CD8-positive, alpha-beta memory T cell (primary cell): ENCODE measurements at regions of chr7 and their contacts with region 1.

Region 1: DNA sequence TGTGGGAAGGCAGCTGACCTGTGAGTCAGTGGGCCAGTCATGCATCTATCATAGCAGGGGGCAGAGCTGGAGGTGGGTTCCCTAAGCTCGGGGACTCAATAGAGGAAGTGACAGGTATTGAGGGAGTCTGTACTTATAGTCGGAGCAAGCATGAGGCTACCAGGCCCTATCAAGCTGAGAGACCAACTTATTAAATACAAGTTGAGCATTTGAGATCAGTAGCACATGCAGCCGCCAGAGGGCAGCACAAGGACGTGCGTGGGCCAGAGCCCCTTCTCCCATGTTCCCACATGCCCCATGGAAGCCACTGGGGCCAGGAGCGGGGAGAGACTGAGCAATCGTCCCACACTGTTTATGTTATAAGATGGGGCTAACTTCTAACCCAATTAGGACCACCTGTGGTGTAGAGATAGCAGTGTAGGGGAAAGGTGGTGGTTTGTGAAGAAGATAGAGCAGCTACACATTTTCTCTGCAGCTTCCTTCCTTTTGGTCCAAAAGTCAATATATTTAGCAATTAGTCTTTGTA is 13.0 kb upstream of the STK31 start:
- DNase-seq: peak; percentile 27 to 69 (median 32)
- H3K4me3 ChIP-seq: no peak overlapping the region
- H3K4me3 Mint-ChIP-seq: peak overlapping the region in 1 of 7 donors; percentile 67
- H3K27ac ChIP-seq: no peak overlapping the region
- H3K27ac Mint-ChIP-seq: no peak overlapping the region
- H3K4me1 ChIP-seq: no peaks in the 10 kb centered on the region
- H3K4me1 Mint-ChIP-seq: peaks cover 2 to 5% (median 3%) of the 10 kb centered on the region in 3 donors
- H3K27me3 ChIP-seq: no peaks in the 10 kb centered on the region
- H3K27me3 Mint-ChIP-seq: no peaks in the 10 kb centered on the region

Region 2: GRCh38 chr7:23679898-23680413 is 17.0 kb before region 1 on chr7 and contains the start of gene FAM221A:
- CTCF ChIA-PET with region 1: interaction called, 29 read pairs
- POLR2A ChIA-PET with region 1: no interaction called
- DNase-seq: peak; percentile 73 to 85 (median 77)
- H3K4me3 ChIP-seq: peak within 1 kb of the TSS; percentile 94
- H3K4me3 Mint-ChIP-seq: peak within 1 kb of the TSS; percentile 93 to 97 (median 96)
- H3K27ac ChIP-seq: peak within 1 kb of the TSS; percentile 18
- H3K27ac Mint-ChIP-seq: peak within 1 kb of the TSS; percentile 65 to 96 (median 84)
- H3K4me1 ChIP-seq: peaks cover 4% of the 10 kb centered on the region
- H3K4me1 Mint-ChIP-seq: peaks cover 17 to 30% (median 21%) of the 10 kb centered on the region in 3 donors
- H3K27me3 ChIP-seq: no peaks in the 10 kb centered on the region
- H3K27me3 Mint-ChIP-seq: peaks cover 0 to 4% of the 10 kb centered on the region in 2 donors
- total RNA-seq, gene FAM221A: 5.8 to 6.2 TPM

Region 3: DNA sequence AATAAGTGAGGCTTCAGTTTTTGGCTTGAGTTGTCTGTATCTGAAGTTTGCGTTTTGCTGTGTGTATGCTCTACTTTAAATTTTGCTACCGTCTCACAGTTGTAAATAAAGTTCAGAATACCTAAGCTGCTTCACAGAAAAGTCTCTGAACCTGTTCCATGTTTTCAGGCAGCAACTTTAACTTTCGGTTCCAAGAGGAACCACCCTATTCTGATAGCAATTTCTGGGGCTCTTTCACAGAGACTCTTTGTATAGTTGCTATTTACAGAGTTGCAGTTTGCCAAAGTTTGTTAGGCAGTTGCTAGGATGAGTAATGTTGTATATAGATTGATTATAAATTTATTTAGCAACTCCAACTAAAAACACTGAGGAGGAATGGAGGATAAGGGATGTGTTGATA is 11.2 kb before region 1 on chr7:
- CTCF ChIA-PET with region 1: interaction called, 29 read pairs
- POLR2A ChIA-PET with region 1: no interaction called
- DNase-seq: no peak
- H3K4me3 ChIP-seq: no peak overlapping the region
- H3K4me3 Mint-ChIP-seq: peak overlapping the region in 1 of 7 donors; percentile 41
- H3K27ac ChIP-seq: no peak overlapping the region
- H3K27ac Mint-ChIP-seq: no peak overlapping the region
- H3K4me1 ChIP-seq: peaks cover 4% of the 10 kb centered on the region
- H3K4me1 Mint-ChIP-seq: peaks cover 13 to 21% (median 15%) of the 10 kb centered on the region in 3 donors
- H3K27me3 ChIP-seq: no peaks in the 10 kb centered on the region
- H3K27me3 Mint-ChIP-seq: no peaks in the 10 kb centered on the region

Region 4: DNA sequence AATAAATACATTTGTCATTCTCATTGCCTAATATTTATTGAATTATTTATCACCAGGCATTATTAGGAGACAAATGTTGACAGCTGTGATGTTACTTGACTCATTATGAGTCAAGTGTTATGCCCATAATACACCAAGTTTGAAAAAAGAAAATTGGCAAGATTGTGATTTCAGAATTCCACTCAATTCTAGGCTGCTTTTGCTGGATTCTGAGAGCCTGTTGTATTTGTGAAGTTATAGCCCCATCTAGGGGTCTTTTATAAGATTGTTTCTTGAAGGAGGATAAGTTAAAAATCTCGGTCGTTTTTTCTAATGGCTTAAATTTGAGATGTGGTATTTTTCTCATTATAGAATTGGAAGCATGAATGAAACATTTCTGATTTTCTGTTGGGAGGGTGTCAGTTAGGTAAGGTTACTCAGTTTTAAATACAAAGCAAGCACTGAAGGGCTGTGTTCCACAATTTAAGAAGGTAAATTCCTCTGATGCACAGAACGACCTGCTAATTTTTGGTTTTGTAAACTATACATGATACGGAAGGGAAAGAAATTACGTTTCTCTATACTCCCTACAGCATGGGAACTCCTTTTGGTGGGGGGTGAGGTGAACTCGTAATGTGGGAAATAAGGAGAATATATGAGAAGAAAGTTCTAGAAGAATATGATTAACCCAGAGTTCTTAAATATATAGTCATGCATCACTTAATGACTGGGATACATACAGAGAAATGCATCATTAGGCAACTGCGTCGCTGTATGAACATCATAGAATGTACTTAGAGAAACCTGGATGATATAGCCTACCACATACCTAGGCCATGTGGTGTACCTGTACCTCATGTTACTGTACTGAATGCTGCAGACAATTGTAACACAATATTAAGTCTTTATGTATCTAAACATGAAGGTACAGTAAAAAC is 15.6 kb after region 1 on chr7:
- CTCF ChIA-PET with region 1: interaction called, 18 read pairs
- POLR2A ChIA-PET with region 1: no interaction called
- DNase-seq: peak in 2 of 5 donors; percentile 18 to 40
- H3K4me3 ChIP-seq: no peak overlapping the region
- H3K4me3 Mint-ChIP-seq: no peak overlapping the region
- H3K27ac ChIP-seq: no peak overlapping the region
- H3K27ac Mint-ChIP-seq: no peak overlapping the region
- H3K4me1 ChIP-seq: no peaks in the 10 kb centered on the region
- H3K4me1 Mint-ChIP-seq: no peaks in the 10 kb centered on the region
- H3K27me3 ChIP-seq: no peaks in the 10 kb centered on the region
- H3K27me3 Mint-ChIP-seq: peaks cover 0 to 4% of the 10 kb centered on the region in 2 donors

Region 5: DNA sequence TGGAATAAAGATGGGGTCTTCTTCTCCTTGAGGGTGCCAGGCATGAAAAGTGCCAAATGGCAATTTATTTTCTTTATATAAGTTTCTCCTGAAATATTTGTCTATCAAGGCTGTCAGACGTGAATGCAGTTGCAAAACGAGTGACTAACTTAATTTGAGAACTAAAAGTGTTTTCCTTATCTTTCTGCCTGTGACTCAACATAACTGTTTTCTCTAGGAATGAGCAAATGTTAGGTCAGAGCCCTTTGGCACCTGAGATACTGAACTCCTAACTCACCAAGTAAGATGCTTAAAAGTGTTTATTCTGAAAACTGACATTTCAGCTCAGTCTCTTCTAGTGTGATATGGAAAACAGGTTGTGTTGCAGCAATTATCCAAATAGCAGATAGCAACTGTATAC is 210.0 kb after region 1 on chr7:
- CTCF ChIA-PET with region 1: no interaction called
- POLR2A ChIA-PET with region 1: no interaction called
- DNase-seq: no peak
- H3K4me3 ChIP-seq: no peak overlapping the region
- H3K4me3 Mint-ChIP-seq: no peak overlapping the region
- H3K27ac ChIP-seq: no peak overlapping the region
- H3K27ac Mint-ChIP-seq: no peak overlapping the region
- H3K4me1 ChIP-seq: no peaks in the 10 kb centered on the region
- H3K4me1 Mint-ChIP-seq: no peaks in the 10 kb centered on the region
- H3K27me3 ChIP-seq: no peaks in the 10 kb centered on the region
- H3K27me3 Mint-ChIP-seq: peaks cover 0 to 3% of the 10 kb centered on the region in 2 donors